Tibial artery (tissue), 4 donors: ENCODE measurements at regions of chr3 and their contacts with region 1.

Region 1: DNA sequence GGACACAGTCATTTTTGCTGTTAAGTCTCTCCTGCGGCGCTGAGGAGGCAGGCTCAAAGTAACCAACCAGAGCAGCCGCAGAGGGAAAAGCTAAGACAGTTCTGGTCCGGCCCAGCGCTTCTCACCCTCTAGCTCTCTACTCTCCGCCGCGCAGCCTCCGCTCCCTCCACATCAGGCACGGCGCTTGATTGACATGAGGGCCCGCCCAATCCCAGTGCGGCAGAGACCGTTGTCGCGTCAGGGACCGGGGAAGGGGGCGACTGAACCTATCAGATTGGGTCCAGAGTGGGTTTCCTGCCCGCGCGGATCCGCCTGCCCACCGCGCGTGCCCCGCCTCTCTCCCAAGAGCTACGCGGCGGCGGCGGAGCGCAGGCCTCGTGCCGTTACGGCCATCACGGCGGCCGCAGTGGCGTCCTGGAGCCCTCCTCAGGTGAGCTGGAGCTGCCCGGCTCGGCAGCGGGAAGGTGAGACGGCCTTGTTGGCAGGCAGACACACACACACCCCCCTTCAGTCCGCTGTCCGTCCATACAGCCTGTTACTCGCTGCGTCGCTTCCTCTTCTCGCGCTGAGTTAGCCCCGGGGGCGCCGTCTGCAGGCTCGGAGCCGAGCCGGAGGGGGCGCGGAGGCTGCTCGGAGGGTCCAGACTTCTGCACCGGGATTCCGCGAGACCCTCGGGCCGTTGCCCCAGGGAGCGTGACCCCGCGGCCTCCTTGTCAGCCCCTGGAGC is at the start of gene NCK1:
- DNase-seq: peak; percentile 100
- H3K4me3 ChIP-seq: peak within 1 kb of the TSS; percentile 76 to 91
- H3K27ac ChIP-seq: peak within 1 kb of the TSS; percentile 92 to 98
- H3K4me1 ChIP-seq: peaks cover 0 to 19% (median 10%) of the 10 kb centered on the region in 4 donors
- H3K27me3 ChIP-seq: no peaks in the 10 kb centered on the region
- CTCF ChIP-seq: peak in 1 of 2 experiments; percentile 17

Region 2: DNA sequence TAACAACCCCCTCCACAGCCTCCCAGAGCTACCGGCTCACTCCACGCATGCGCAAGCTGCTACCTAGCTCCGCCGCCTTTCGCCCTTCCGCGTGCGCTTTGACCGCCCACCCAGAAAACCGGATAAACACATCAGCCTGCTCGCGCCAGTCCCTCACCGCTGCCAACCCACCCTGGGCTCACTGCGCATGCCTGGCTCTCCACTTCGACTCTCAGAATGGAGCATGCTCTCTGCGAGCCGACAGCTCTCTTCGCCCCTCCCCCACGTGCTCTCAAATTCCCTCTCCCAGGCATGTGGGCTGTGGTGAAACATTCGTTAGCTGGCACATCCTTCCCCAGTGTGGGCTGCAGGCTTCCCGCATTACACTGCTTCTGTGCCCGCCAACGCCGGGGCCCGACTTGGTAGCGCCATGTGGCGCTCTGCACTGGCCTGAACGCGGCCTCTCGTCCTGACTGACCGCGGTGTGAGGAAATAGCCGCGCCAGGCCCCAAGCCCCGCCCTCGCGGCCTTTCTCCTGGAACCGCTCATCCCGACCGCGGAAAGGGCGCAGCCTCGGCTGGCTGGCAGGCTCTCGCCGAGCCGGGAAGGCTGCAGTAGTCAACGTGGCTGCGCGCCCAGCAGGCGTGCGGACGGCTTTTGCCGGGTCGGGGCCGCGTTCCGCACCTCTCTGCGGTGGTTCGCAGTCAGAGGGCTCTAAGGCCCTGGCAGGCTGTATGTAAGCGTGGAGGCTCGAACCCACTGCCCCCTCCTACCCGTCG is 665.5 kb before region 1 on chr3:
- intact Hi-C with region 1: loop called (anchors 10 kb)
- DNase-seq: peak; percentile 99
- H3K4me3 ChIP-seq: peak overlapping the region; percentile 92 to 98
- H3K27ac ChIP-seq: peak overlapping the region; percentile 100
- H3K4me1 ChIP-seq: peaks cover 0 to 27% (median 13%) of the 10 kb centered on the region in 4 donors
- H3K27me3 ChIP-seq: no peaks in the 10 kb centered on the region
- CTCF ChIP-seq: no peak

Region 3: DNA sequence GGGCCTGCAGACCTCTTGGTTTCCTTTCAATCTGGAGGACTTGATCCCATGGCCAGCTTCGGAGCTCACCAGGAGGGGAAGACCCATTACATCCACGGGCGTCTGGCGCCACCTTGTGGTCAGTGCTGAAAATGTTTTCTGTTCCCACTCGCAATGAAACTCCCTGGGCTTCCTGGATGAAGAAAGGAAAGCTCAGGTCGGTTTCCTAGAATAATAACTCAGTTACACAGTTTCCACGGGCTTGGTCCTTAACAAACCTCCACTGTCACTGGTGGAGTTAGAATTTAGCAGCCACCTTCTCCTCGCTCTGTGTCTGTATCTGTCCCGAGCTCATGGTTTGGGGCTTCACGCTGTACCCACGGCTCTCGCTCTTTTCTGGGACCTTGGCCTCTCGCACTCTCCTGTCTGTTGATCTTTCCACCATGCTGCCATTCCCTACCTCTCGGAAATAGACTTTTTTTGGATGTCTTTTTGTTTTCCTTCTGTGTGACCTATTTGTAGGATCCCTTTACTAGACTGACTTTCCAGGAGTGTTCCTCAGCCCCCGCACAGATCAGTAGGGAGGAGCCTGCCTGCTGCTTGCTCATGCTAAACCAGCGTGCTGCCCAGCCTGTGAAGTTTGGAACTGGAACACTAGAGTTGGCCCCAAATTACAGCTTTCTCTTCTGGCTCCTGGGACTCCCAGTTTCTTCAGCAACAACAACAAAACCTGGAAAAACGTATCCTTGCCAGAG is 152.1 kb after region 1 on chr3:
- intact Hi-C with region 1: loop called (anchors 10 kb)
- DNase-seq: peak; percentile 93 to 94
- H3K4me3 ChIP-seq: peak overlapping the region; percentile 47 to 60
- H3K27ac ChIP-seq: peak overlapping the region; percentile 80 to 81
- H3K4me1 ChIP-seq: peaks cover 0 to 8% (median 4%) of the 10 kb centered on the region in 4 donors
- H3K27me3 ChIP-seq: no peaks in the 10 kb centered on the region
- CTCF ChIP-seq: peak; percentile 85 to 96